HepG2 (cell line): ENCODE measurements at regions of chr1 and their contacts with region 1.

Region 1: GRCh38 chr1:202122639-202123335 is at the start of gene GPR37L1:
- DNase-seq: peak; percentile 58
- ATAC-seq: peak; percentile 92
- H3K4me3 ChIP-seq: no peak within 1 kb of the TSS; a peak in 1 of 6 replicates
- H3K27ac ChIP-seq: no peak within 1 kb of the TSS
- H3K4me1 ChIP-seq: peaks cover 17% of the 10 kb centered on the region
- H3K27me3 ChIP-seq: peaks cover 4 to 40% of the 10 kb centered on the region in 2 experiments; a peak in 4 of 5 replicates
- CTCF ChIP-seq: peak; percentile 87
- EP300 ChIP-seq: no peak
- POLR2A ChIP-seq: no peak
- RAD21 ChIP-seq: peak; percentile 67
- total RNA-seq, gene GPR37L1: not detected in 2 replicates

Region 2: GRCh38 chr1:201999625-202000238 is 123.1 kb before region 1 on chr1:
- CTCF ChIA-PET with region 1: interaction called, 42 read pairs
- POLR2A ChIA-PET with region 1: interaction called, 4 read pairs
- in situ Hi-C with region 1: no loop called
- intact Hi-C with region 1: loop called (anchors 1 kb)
- DNase-seq: peak; percentile 64
- ATAC-seq: peak; percentile 90
- H3K4me3 ChIP-seq: no peak overlapping the region
- H3K27ac ChIP-seq: no peak overlapping the region
- H3K4me1 ChIP-seq: no peaks in the 10 kb centered on the region
- H3K27me3 ChIP-seq: no peaks in the 10 kb centered on the region
- CTCF ChIP-seq: peak; percentile 84
- EP300 ChIP-seq: no peak
- POLR2A ChIP-seq: peak in 1 of 2 experiments; percentile 43; a peak in 1 of 4 replicates
- RAD21 ChIP-seq: peak; percentile 50; the same call in 1 of the 2 replicates

Region 3: GRCh38 chr1:202090997-202091396 is 31.8 kb before region 1 on chr1:
- CTCF ChIA-PET with region 1: interaction called, 3 read pairs
- POLR2A ChIA-PET with region 1: no interaction called
- in situ Hi-C with region 1: no loop called
- intact Hi-C with region 1: loop called (anchors 1 kb)
- DNase-seq: peak; percentile 45
- ATAC-seq: peak; percentile 42
- H3K4me3 ChIP-seq: no peak overlapping the region
- H3K27ac ChIP-seq: no peak overlapping the region
- H3K4me1 ChIP-seq: peaks cover 48% of the 10 kb centered on the region
- H3K27me3 ChIP-seq: no peaks in the 10 kb centered on the region
- CTCF ChIP-seq: peak; percentile 71
- EP300 ChIP-seq: no peak
- POLR2A ChIP-seq: no peak
- RAD21 ChIP-seq: peak; percentile 58

Region 4: DNA sequence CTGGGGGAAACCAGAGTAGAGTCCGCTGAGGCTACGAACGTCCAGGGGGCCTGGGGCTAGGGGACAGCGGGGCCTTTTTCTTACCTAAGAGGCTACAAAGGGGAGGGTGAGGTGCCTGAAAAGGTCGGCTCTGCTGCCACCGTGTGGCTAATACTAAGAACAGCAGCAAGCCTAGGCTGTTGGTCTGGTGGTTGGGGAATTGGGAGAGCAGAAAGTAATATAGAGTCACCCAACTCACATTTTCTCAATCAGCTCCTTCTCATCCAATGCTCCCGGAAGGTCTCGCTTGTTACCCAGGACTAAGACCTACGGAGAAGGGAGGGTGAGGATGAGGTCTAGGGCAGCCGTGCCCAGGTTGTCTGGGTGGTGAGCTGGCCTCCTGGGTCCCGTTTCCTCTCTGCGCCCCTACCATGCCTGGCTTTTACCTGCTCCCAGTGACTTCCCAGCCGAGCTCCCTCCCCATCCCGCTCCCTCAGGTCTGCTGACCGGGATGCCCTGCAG is 12.5 kb after region 1 on chr1:
- CTCF ChIA-PET with region 1: interaction called, 8 read pairs
- POLR2A ChIA-PET with region 1: no interaction called
- in situ Hi-C with region 1: no loop called
- intact Hi-C with region 1: loop called (anchors 1 kb)
- DNase-seq: peak; percentile 52
- ATAC-seq: peak; percentile 92
- H3K4me3 ChIP-seq: no peak overlapping the region
- H3K27ac ChIP-seq: no peak overlapping the region
- H3K4me1 ChIP-seq: 0 out of 2 replicates have a peak, but pooled peaks cover 6% of the 10 kb centered on the region
- H3K27me3 ChIP-seq: no peaks in the 10 kb centered on the region
- CTCF ChIP-seq: peak; percentile 86
- EP300 ChIP-seq: no peak
- POLR2A ChIP-seq: no peak
- RAD21 ChIP-seq: peak; percentile 58